HCT116 (cell line): ENCODE measurements at regions of chr13 and their contacts with region 1.

Region 1: DNA sequence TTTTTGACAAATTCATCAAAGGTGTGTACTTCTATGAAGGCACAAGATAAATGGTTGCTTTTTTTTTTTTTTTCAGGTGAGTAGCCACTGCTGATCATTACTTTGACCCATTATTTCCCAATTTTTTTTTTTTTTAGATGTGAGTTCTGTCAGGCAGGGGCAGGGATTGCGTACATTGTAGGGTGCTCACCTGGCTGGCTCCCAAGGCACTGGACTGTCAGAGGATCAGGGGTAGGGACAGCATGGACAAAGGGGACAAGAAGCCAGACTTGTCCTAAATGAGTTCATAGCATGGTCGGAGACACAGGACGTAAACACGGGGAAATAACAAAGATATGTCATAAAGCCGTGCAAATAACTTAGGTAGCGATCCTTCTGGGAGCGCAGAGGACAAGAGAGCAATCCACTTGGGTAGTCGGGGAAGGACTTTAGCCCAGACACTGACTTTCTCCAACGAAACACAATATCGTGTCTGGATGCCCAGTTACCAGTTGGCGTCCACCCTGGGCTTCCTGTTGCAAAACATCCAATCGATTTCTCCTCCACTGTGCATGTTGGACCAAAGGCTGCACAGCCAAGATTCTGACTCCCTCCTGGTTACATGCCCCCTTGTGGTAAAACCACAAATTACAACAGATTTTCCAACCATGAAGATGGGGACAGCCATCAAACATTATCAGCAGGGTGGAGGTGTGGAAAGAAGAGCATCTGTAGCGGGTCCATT is 27.5 kb upstream of the KATNAL1 start:
- DNase-seq: peak; percentile 59
- ATAC-seq: peak; percentile 53
- H3K4me3 ChIP-seq: no peak overlapping the region
- H3K27ac ChIP-seq: no peak overlapping the region
- H3K4me1 ChIP-seq: peaks cover 42 to 74% of the 10 kb centered on the region in 2 experiments
- H3K27me3 ChIP-seq: no peaks in the 10 kb centered on the region
- CTCF ChIP-seq: peak; percentile 24 to 79 (median 67); a peak in 5 of 6 replicates
- POLR2A ChIP-seq: no peak
- RAD21 ChIP-seq: peak; percentile 58

Region 2: DNA sequence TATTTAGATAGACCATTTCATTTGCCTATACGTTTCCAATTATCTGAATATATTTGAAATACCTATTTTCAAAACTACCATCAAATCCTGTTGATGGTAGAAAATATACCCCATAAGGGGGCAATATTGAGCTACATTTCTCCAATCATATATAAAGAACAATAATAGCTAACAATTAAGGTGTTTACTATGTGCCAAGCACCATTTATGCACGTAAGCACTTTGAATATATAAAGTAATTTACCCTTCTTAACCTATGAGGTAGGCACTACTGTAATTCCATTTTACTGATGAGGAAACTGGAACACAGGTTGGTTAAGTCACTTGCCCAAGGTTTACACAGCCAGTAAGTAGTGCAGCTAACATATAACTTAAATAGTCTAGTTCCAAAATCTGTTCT is 563.6 kb before region 1 on chr13:
- CTCF ChIA-PET with region 1: no interaction called
- POLR2A ChIA-PET with region 1: no interaction called
- RAD21 ChIA-PET with region 1: no interaction called
- intact Hi-C with region 1: loop called (anchors 10 kb)
- DNase-seq: peak; percentile 37
- ATAC-seq: 0 out of 2 replicates have a peak, but pooled peaks have one; percentile 59
- H3K4me3 ChIP-seq: no peak overlapping the region
- H3K27ac ChIP-seq: no peak overlapping the region
- H3K4me1 ChIP-seq: no peaks in the 10 kb centered on the region
- H3K27me3 ChIP-seq: no peaks in the 10 kb centered on the region
- CTCF ChIP-seq: peak; percentile 36 to 63 (median 56); a peak in 4 of 6 replicates
- POLR2A ChIP-seq: no peak
- RAD21 ChIP-seq: peak; percentile 69

Region 3: DNA sequence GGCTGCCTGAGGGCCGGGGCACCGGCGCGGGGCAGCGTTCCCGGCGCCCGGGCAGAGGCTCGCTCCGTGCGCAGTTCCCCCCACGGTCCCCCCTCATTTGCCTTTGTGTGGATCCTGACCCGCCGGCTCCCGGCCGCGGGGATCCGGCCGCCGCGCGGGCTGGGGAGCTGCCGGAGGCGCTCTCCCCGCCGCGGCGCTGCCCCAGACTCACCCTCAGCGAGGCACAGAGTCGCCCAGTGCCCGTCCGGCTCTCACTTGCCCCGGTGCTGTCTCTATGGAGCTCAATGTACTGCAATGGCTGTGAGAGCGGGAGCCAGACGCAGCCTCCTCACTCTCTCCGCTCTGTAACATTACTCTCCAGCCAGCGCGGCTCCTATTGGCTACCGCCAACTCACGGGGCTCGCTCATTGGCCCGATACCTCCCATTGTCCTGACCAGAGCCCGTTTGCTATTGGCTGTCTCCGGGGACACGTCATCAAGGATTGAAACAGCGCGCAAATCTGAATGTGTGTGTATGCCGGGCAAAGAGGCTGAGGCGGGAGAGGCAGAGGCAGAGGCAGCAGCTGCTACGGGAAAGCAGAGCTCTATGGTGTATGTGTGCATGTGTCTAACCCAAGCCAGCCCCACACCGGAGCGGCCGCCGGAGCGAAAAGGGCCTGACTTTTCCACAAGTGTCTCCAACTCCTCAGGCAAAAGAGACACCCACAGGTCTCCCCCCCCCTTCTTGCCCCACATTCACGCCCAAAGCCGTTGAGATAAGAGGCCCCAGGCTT is 130.9 kb after region 1 on chr13 and contains the start of gene HMGB1:
- CTCF ChIA-PET with region 1: no interaction called
- POLR2A ChIA-PET with region 1: no interaction called
- RAD21 ChIA-PET with region 1: no interaction called
- intact Hi-C with region 1: loop called (anchors 5 kb)
- DNase-seq: peak; percentile 98
- ATAC-seq: peak; percentile 90
- H3K4me3 ChIP-seq: peak within 1 kb of the TSS; percentile 73 to 80
- H3K27ac ChIP-seq: peak within 1 kb of the TSS; percentile 99
- H3K4me1 ChIP-seq: peaks cover 11 to 32% of the 10 kb centered on the region in 2 experiments; a peak in 3 of 4 replicates
- H3K27me3 ChIP-seq: no peaks in the 10 kb centered on the region
- CTCF ChIP-seq: no peak
- POLR2A ChIP-seq: peak; percentile 77
- RAD21 ChIP-seq: no peak
- total RNA-seq, gene HMGB1: 678 TPM